Dorsolateral prefrontal cortex (tissue), 120 donors: ENCODE measurements at regions of chr12 and their contacts with region 1.

Region 1: GRCh38 chr12:6533923-6534694 is at the start of gene GAPDH:
- DNase-seq: peak; percentile 93 to 99 (median 97)
- H3K4me3 ChIP-seq: peak within 1 kb of the TSS; percentile 57 to 100 (median 98)
- H3K27ac ChIP-seq: peak within 1 kb of the TSS; percentile 67 to 100 (median 99)
- H3K27me3 ChIP-seq: no peaks in the 10 kb centered on the region
- CTCF ChIP-seq: peak in 10 of 56 donors; percentile 5 to 26 (median 14)
- total RNA-seq, gene GAPDH: 1,552 to 3,778 (median 2,635) TPM

Region 2: GRCh38 chr12:6323340-6323994 is 210.6 kb before region 1 on chr12:
- intact Hi-C with region 1: loop called in 1 of 2 experiments (anchors 10 kb)
- DNase-seq: no peak
- H3K4me3 ChIP-seq: peak overlapping the region in 16 of 59 donors; percentile 2 to 40 (median 19)
- H3K27ac ChIP-seq: peak overlapping the region in 50 of 59 donors; percentile 3 to 81 (median 55)
- H3K27me3 ChIP-seq: no peaks in the 10 kb centered on the region
- CTCF ChIP-seq: peak in 53 of 56 donors; percentile 13 to 62 (median 42)

Region 3: GRCh38 chr12:6423267-6424007 is 110.7 kb before region 1 on chr12:
- intact Hi-C with region 1: loop called (anchors 1 to 2 kb)
- DNase-seq: peak; percentile 49 to 80 (median 76)
- H3K4me3 ChIP-seq: peak overlapping the region in 1 of 59 donors; percentile 21
- H3K27ac ChIP-seq: peak overlapping the region in 9 of 59 donors; percentile 9 to 46 (median 33)
- H3K27me3 ChIP-seq: peaks cover 0 to 6% (median 0%) of the 10 kb centered on the region in 45 donors
- CTCF ChIP-seq: peak; percentile 66 to 97 (median 92)

Region 4: DNA sequence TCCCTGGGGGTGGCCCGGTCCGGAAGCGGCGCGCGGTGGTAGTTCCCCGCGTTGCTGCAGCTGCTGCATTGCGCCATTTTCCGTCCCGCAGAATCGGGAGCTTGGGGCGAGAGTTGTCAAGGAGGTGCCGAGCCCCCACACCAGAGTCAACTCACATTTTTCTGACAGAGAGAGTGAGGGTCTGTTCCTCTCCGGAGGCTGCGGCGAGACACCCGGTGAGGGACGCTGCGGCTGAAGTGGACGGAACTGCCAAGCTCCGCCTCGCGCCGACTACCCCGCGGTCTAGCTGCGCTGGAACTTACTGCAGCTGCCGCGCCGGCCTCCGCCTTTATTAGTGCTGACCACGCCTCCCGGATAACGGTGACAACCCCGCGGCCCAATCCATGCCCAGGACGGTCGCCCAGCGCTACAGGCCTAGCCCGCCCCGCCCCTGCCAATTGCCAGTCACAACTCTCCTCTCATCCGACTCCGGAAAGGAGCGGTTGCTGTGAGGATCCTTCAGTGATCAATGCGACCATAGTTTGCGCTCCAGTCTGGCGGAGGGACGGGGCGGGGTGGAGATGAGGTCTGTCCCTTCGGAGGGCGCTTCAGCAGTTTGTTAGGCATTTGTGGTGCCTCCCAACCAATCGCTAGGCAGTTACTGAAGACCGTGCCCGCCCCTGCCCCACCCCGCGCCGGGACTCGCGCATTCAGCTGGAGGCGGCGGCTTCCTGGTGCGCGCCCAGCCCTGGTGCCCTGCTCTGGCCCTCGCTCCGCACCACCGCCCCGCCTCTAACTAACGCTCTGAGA is 63.5 kb before region 1 on chr12 and contains the start of gene VAMP1:
- intact Hi-C with region 1: loop called (anchors 1 kb)
- DNase-seq: peak; percentile 96 to 100 (median 100)
- H3K4me3 ChIP-seq: peak within 1 kb of the TSS; percentile 64 to 99 (median 87)
- H3K27ac ChIP-seq: peak within 1 kb of the TSS; percentile 58 to 97 (median 91)
- H3K27me3 ChIP-seq: no peaks in the 10 kb centered on the region
- CTCF ChIP-seq: peak in 44 of 56 donors; percentile 4 to 65 (median 30)
- total RNA-seq, gene VAMP1: 90.3 to 464 (median 220) TPM

Region 5: GRCh38 chr12:6493497-6494257 is 40.4 kb before region 1 on chr12 and contains the start of gene NCAPD2:
- intact Hi-C with region 1: loop called (anchors 1 to 2 kb)
- DNase-seq: peak; percentile 93 to 99 (median 98)
- H3K4me3 ChIP-seq: peak within 1 kb of the TSS; percentile 57 to 100 (median 90)
- H3K27ac ChIP-seq: peak within 1 kb of the TSS; percentile 69 to 99 (median 97)
- H3K27me3 ChIP-seq: no peaks in the 10 kb centered on the region
- CTCF ChIP-seq: peak in 44 of 56 donors; percentile 13 to 58 (median 34)
- total RNA-seq, gene NCAPD2: 10.2 to 44.7 (median 21.8) TPM

Region 6: DNA sequence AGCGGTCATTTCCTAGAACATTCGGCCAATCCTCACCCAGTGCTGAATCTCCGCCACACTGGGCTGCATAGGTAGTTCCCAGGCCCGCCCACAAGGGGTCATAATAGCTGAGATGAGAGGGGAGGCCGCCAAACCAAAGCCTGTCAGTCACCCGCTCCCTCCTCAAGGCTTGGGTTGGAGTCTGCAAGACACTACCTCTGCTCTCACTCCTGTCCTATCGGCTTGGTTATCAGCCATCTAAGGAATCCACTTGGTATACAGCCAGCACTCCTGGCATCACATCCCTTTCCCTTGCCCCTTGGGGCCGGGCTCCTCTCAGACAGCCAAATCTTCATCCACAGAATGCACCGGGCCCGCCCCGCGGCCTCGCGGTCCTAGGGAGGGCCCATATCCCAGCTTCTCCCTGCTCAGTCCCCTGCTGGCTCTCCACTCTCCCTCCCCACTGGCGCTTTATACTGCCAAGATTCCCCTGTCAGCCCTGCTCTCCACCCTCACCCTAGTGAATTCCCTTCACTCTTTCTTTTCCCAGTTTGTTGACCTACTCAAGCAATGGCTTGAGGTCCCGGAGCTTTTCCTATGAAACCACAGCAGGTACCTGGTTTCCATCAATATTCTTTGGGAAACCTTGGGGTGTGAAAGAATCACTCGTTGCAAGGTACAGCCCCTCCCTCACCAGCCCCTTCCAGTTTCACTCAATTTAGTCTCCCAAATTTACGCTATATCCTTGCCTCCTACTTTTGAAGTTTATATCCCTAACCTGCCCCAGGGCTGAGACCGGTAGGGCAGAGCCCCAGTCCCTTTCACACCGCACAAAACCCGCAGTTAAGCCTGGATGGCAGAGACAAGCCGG is 20.3 kb after region 1 on chr12:
- intact Hi-C with region 1: loop called (anchors 1 kb)
- DNase-seq: peak in 7 of 10 donors; percentile 67 to 88 (median 75)
- H3K4me3 ChIP-seq: peak overlapping the region; percentile 64 to 100 (median 95)
- H3K27ac ChIP-seq: peak overlapping the region in 58 of 59 donors; percentile 8 to 98 (median 94)
- H3K27me3 ChIP-seq: no peaks in the 10 kb centered on the region
- CTCF ChIP-seq: peak in 55 of 56 donors; percentile 25 to 76 (median 58)